WTC11 (cell line): ENCODE measurements at regions of chr15 and their contacts with region 1.

Region 1: GRCh38 chr15:81265944-81266775 is 57.8 kb downstream of the STARD5 start:
- DNase-seq: peak; percentile 90
- ATAC-seq: peak; percentile 93
- H3K4me3 Mint-ChIP-seq: peak overlapping the region; percentile 58
- H3K27ac Mint-ChIP-seq: no peak overlapping the region
- H3K4me1 Mint-ChIP-seq: peaks cover 13% of the 10 kb centered on the region
- H3K27me3 Mint-ChIP-seq: no peaks in the 10 kb centered on the region
- CTCF ChIP-seq: peak; percentile 78

Region 2: GRCh38 chr15:80989518-80990478 is 276.4 kb before region 1 on chr15 and contains the start of gene MESD:
- CTCF ChIA-PET with region 1: interaction called, 35 read pairs
- POLR2A ChIA-PET with region 1: no interaction called
- DNase-seq: peak; percentile 98
- ATAC-seq: peak; percentile 98
- H3K4me3 Mint-ChIP-seq: peak within 1 kb of the TSS; percentile 99
- H3K27ac Mint-ChIP-seq: peak within 1 kb of the TSS; percentile 97
- H3K4me1 Mint-ChIP-seq: peaks cover 48% of the 10 kb centered on the region
- H3K27me3 Mint-ChIP-seq: no peaks in the 10 kb centered on the region
- CTCF ChIP-seq: no peak
- total RNA-seq, gene MESD: 26.9 to 28.3 TPM (median 27.9 TPM) in 3 replicates

Region 3: GRCh38 chr15:81133782-81134461 is 132.2 kb before region 1 on chr15 and contains the start of gene CFAP161:
- CTCF ChIA-PET with region 1: interaction called, 13 read pairs
- POLR2A ChIA-PET with region 1: no interaction called
- DNase-seq: peak; percentile 95
- ATAC-seq: peak; percentile 100
- H3K4me3 Mint-ChIP-seq: peak within 1 kb of the TSS; percentile 76
- H3K27ac Mint-ChIP-seq: no peak within 1 kb of the TSS
- H3K4me1 Mint-ChIP-seq: peaks cover 7% of the 10 kb centered on the region
- H3K27me3 Mint-ChIP-seq: peaks cover 54% of the 10 kb centered on the region
- CTCF ChIP-seq: no peak
- total RNA-seq, gene CFAP161: not detected in 3 replicates

Region 4: DNA sequence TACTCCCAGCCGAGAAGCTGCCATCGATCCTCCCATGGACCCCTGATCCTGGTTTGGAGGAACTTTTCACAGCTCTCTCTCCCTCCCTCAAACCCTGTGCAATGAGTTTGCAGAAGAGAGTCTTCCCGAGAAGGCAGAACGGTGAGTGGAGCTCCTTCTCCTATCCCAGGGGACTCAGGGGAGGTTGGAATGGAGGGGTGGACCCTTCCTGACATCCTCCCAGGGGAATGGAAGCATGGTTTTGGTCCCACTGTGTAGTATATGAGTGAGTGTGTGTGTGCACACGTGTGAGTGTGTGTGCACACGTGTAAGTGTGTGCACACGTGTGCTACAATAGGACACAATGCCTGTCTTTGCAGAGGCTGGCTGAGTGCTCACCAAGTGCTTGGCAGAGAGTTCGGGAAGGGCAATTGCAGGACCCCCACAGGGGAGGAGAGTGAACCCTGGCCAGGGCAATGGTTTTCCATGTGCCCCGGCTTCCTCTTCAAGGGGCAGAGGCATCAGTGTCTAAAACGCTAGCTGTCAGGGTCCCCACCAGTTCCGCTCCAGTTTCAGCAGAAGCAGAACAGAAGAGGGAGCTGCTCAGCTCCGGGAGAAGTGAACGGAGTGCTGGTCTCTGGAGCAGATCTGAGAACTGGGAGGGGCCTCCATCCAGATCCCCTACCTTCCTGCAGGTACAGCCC is 83.3 kb before region 1 on chr15:
- CTCF ChIA-PET with region 1: interaction called, 61 read pairs
- POLR2A ChIA-PET with region 1: no interaction called
- DNase-seq: peak; percentile 40
- ATAC-seq: peak; percentile 96
- H3K4me3 Mint-ChIP-seq: no peak overlapping the region
- H3K27ac Mint-ChIP-seq: no peak overlapping the region; the same call in 1 of the 2 replicates
- H3K4me1 Mint-ChIP-seq: peaks cover 4% of the 10 kb centered on the region; the same call in 1 of the 2 replicates
- H3K27me3 Mint-ChIP-seq: no peaks in the 10 kb centered on the region
- CTCF ChIP-seq: no peak

Region 5: GRCh38 chr15:81244306-81244705 is 21.9 kb before region 1 on chr15:
- CTCF ChIA-PET with region 1: interaction called, 12 read pairs
- POLR2A ChIA-PET with region 1: no interaction called
- DNase-seq: no peak
- ATAC-seq: no peak
- H3K4me3 Mint-ChIP-seq: no peak overlapping the region
- H3K27ac Mint-ChIP-seq: no peak overlapping the region
- H3K4me1 Mint-ChIP-seq: no peaks in the 10 kb centered on the region
- H3K27me3 Mint-ChIP-seq: no peaks in the 10 kb centered on the region
- CTCF ChIP-seq: no peak

Region 6: DNA sequence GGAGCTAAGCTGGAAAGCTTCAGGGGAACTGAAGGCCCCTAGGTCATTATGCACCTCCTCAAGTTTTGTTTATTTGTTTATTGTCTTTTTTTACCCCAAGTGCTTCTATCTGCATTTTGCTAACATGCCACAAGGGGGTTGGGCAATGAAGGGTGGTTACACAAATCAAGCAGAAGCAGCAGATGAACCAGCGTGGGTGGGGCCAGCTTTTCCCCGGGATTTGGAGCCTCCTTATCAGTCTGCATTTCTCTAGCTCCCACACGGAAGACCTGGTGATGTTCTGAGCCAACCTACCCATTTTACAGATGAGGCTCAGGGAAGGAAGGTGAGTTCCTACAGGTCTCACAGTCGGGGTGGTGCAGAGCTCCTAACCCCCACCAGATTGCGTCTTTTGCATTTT is 91.1 kb after region 1 on chr15:
- CTCF ChIA-PET with region 1: interaction called, 12 read pairs
- POLR2A ChIA-PET with region 1: no interaction called
- DNase-seq: no peak
- ATAC-seq: peak; percentile 61
- H3K4me3 Mint-ChIP-seq: no peak overlapping the region
- H3K27ac Mint-ChIP-seq: no peak overlapping the region
- H3K4me1 Mint-ChIP-seq: peaks cover 16% of the 10 kb centered on the region
- H3K27me3 Mint-ChIP-seq: no peaks in the 10 kb centered on the region
- CTCF ChIP-seq: no peak

Region 7: GRCh38 chr15:81433462-81433861 is 167.3 kb after region 1 on chr15:
- CTCF ChIA-PET with region 1: no interaction called
- POLR2A ChIA-PET with region 1: no interaction called
- DNase-seq: no peak
- ATAC-seq: no peak
- H3K4me3 Mint-ChIP-seq: no peak overlapping the region
- H3K27ac Mint-ChIP-seq: no peak overlapping the region
- H3K4me1 Mint-ChIP-seq: peaks cover 4% of the 10 kb centered on the region
- H3K27me3 Mint-ChIP-seq: no peaks in the 10 kb centered on the region
- CTCF ChIP-seq: no peak